Posterior vena cava (tissue), 2 donors: ENCODE measurements at regions of chr22 and their contacts with region 1.

Region 1: DNA sequence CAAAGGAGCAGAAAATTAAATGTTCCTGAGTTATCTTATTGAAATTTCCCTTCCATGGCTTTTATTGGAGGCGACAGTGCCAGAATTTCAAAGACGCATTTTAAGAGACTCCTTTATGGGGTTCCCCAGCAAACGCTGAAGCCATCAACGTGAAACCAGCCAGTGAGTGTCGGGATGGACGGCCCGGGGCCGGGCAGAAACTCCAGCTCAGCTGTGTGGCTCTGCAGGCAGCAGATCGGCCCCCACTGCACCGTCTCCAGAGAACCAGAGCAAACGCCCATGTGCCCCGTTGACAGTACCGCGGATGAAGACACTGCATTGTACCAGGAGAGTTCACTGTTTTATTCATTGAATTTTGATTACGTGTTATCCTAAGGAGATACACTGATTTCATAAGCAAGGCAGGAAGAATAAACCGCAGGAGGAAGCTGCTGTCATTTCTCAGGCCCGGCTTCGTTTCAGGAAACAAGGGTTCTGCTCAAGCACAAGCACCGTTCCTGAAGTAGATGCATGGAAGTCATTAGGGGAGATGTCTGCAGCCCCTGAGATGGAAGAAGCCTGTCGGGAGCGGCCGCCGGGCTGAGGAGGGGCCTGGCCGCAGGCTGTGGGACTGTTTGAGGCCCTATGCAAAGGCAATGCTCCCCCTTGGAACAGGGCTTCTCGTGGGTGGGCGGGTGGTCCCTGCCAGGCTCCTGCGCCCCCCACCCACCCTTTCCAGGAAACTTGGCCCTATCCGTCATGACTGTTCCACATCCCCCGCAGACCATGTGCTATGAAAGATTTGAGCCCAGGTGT is 639.7 kb downstream of the TBC1D22A start:
- DNase-seq: no peak

Region 2: GRCh38 chr22:46803031-46803880 is 598.9 kb before region 1 on chr22:
- intact Hi-C with region 1: loop called in 1 of 2 experiments (anchors 5 kb)
- DNase-seq: no peak